HepG2 (cell line): ENCODE measurements at regions of chr2 and their contacts with region 1.

Region 1: GRCh38 chr2:162073888-162074645 is at the start of gene DPP4:
- DNase-seq: peak; percentile 65
- ATAC-seq: peak; percentile 95
- H3K4me3 ChIP-seq: peak within 1 kb of the TSS; percentile 71 to 89 (median 78)
- H3K27ac ChIP-seq: peak within 1 kb of the TSS; percentile 57
- H3K4me1 ChIP-seq: peaks cover 59% of the 10 kb centered on the region
- H3K27me3 ChIP-seq: no peaks in the 10 kb centered on the region; a peak in 1 of 5 replicates
- CTCF ChIP-seq: peak; percentile 25; the same call in 1 of the 2 replicates
- EP300 ChIP-seq: peak; percentile 16 to 57; a peak in 2 of 4 replicates
- POLR2A ChIP-seq: peak; percentile 79 to 83; a peak in 3 of 4 replicates
- RAD21 ChIP-seq: peak; percentile 82
- total RNA-seq, gene DPP4: 57.2 and 109 TPM in 2 replicates

Region 2: GRCh38 chr2:162029287-162029901 is 44.7 kb before region 1 on chr2:
- CTCF ChIA-PET with region 1: no interaction called
- POLR2A ChIA-PET with region 1: interaction called, 4 read pairs
- in situ Hi-C with region 1: no loop called
- intact Hi-C with region 1: loop called (anchors 1 kb)
- DNase-seq: peak; percentile 43
- ATAC-seq: no peak
- H3K4me3 ChIP-seq: no peak overlapping the region
- H3K27ac ChIP-seq: no peak overlapping the region
- H3K4me1 ChIP-seq: peaks cover 33% of the 10 kb centered on the region
- H3K27me3 ChIP-seq: no peaks in the 10 kb centered on the region
- CTCF ChIP-seq: no peak
- EP300 ChIP-seq: no peak
- POLR2A ChIP-seq: no peak
- RAD21 ChIP-seq: no peak

Region 3: GRCh38 chr2:162085090-162085891 is 11.2 kb after region 1 on chr2:
- CTCF ChIA-PET with region 1: no interaction called
- POLR2A ChIA-PET with region 1: interaction called, 41 read pairs
- in situ Hi-C with region 1: no loop called
- intact Hi-C with region 1: loop called (anchors 1 kb)
- DNase-seq: peak; percentile 85
- ATAC-seq: peak; percentile 80
- H3K4me3 ChIP-seq: no peak overlapping the region
- H3K27ac ChIP-seq: peak overlapping the region; percentile 27
- H3K4me1 ChIP-seq: peaks cover 49% of the 10 kb centered on the region
- H3K27me3 ChIP-seq: no peaks in the 10 kb centered on the region
- CTCF ChIP-seq: no peak
- EP300 ChIP-seq: peak in 1 of 2 experiments; percentile 86; a peak in 2 of 4 replicates
- POLR2A ChIP-seq: no peak
- RAD21 ChIP-seq: no peak

Region 4: DNA sequence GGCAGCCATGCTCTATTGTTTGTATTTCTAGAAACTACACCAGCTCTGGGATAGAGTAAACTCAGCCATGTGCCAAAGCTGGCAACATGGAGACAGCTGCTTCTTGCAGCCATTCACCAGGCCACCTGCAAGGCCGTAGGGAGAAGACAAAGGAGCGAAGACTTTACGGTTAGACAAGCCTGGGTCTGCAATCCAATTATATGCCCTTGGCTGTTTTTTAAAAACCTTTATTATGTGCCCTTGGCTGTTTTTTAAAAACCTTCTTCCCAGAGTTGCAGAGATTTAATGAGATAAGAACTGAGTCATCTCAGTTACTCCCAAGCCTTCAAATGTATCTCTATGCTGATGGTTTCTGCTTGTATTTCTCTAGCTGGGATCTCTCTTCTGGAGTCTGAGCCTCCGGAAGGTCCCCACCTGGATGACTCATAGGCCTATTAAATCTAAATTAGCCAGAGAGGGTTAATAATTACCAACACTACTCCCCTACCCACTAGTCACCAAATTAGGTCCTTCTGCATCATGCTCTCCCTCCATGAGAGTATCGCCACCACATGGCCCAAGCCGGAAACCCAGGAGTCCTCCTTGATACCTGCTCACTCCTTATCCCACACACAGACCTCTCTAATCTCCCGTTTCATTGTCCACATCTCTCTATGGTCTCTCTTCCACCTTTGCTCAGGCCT is 17.4 kb after region 1 on chr2:
- CTCF ChIA-PET with region 1: no interaction called
- POLR2A ChIA-PET with region 1: interaction called, 41 read pairs
- in situ Hi-C with region 1: no loop called
- intact Hi-C with region 1: loop called (anchors 1 kb)
- DNase-seq: peak; percentile 81
- ATAC-seq: peak; percentile 87
- H3K4me3 ChIP-seq: no peak overlapping the region
- H3K27ac ChIP-seq: no peak overlapping the region
- H3K4me1 ChIP-seq: peaks cover 52% of the 10 kb centered on the region
- H3K27me3 ChIP-seq: no peaks in the 10 kb centered on the region
- CTCF ChIP-seq: peak; percentile 70
- EP300 ChIP-seq: peak in 1 of 2 experiments; percentile 34; a peak in 1 of 4 replicates
- POLR2A ChIP-seq: no peak
- RAD21 ChIP-seq: peak; percentile 42; the same call in 1 of the 2 replicates

Region 5: GRCh38 chr2:162107361-162107901 is 33.4 kb after region 1 on chr2:
- CTCF ChIA-PET with region 1: no interaction called
- POLR2A ChIA-PET with region 1: interaction called, 20 read pairs
- in situ Hi-C with region 1: no loop called
- intact Hi-C with region 1: loop called (anchors 1 kb)
- DNase-seq: peak; percentile 80
- ATAC-seq: peak; percentile 93
- H3K4me3 ChIP-seq: no peak overlapping the region
- H3K27ac ChIP-seq: peak overlapping the region; percentile 58
- H3K4me1 ChIP-seq: peaks cover 77% of the 10 kb centered on the region
- H3K27me3 ChIP-seq: no peaks in the 10 kb centered on the region
- CTCF ChIP-seq: no peak
- EP300 ChIP-seq: peak; percentile 14 to 96; a peak in 2 of 4 replicates
- POLR2A ChIP-seq: no peak
- RAD21 ChIP-seq: no peak

Region 6: DNA sequence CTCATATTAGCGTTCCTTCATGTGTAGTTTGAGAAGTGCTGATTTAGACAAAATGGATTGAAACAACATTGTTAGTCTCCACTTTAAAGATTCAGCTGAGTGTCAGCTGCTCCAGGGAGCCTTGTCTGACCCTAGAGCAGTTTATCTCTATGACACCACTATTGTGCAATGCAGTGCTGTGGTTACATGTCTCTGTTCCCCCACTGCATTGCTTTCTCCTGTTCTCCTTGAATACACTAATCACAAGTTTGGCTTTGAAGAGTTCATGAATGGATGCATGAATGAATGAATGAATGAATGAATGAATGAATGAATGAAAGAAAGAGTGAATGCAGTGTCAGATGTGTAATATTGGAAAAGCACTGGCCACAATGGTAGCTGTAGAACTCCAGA is 39.7 kb after region 1 on chr2:
- CTCF ChIA-PET with region 1: no interaction called
- POLR2A ChIA-PET with region 1: interaction called, 20 read pairs
- in situ Hi-C with region 1: no loop called
- intact Hi-C with region 1: loop called (anchors 1 kb)
- DNase-seq: peak; percentile 85
- ATAC-seq: peak; percentile 84
- H3K4me3 ChIP-seq: peak overlapping the region in 1 of 3 experiments; percentile 34; a peak in 2 of 6 replicates
- H3K27ac ChIP-seq: peak overlapping the region; percentile 73
- H3K4me1 ChIP-seq: peaks cover 70% of the 10 kb centered on the region
- H3K27me3 ChIP-seq: no peaks in the 10 kb centered on the region
- CTCF ChIP-seq: no peak
- EP300 ChIP-seq: peak; percentile 82 to 92; a peak in 3 of 4 replicates
- POLR2A ChIP-seq: no peak
- RAD21 ChIP-seq: no peak

Region 7: DNA sequence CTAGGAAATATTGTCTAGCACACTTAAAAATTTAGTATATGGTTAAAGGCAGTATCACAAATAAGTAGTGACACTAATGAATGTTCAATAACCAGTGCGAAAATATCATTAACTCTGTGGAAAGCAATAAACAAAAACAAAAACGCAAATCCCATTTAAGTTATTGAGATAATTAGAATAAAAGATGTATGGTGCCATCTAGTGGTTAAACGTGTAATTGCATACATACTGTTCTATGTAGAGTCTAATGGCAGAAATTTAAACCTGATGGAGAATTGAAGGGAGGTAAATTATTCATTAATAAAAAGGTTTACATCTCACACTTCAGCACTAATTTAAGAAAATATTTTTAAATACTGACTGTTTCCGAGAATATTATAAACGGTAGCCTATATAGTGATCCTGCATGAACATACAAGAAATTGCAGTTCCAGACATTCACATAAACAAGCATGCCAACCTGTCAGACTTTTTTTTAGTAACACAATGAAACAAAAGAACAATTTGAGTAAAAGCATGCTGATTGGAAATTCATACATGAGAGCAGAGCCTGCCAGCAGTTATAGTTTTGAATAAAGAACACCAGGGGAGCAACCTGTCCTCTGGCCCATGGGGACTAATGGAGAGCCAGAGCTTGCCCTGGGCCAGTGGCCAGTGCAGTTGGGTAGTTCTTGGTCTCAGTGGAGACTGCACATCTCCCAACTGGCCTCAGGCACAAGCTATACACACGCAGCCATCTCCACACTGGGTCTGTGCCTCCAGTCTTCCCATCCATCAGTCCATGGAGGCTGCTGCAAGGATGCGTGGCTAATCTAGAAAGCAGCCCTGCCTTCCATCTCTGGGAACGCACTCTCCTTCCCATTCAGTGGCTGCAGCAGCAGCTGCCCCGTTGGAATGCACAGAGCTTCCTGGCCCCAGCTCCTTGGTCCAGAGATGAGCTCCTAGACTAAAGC is 50.0 kb after region 1 on chr2:
- CTCF ChIA-PET with region 1: interaction called, 9 read pairs
- POLR2A ChIA-PET with region 1: no interaction called
- in situ Hi-C with region 1: no loop called
- intact Hi-C with region 1: loop called (anchors 1 kb)
- DNase-seq: peak; percentile 69
- ATAC-seq: peak; percentile 70
- H3K4me3 ChIP-seq: no peak overlapping the region
- H3K27ac ChIP-seq: no peak overlapping the region
- H3K4me1 ChIP-seq: peaks cover 11% of the 10 kb centered on the region
- H3K27me3 ChIP-seq: no peaks in the 10 kb centered on the region; a peak in 1 of 5 replicates
- CTCF ChIP-seq: peak; percentile 76
- EP300 ChIP-seq: no peak
- POLR2A ChIP-seq: no peak
- RAD21 ChIP-seq: peak; percentile 80